ENCODE measurements at regions of chr1 and their contacts with region 1.

Region 1: GRCh38 chr1:155323798-155324610 is 3.3 kb downstream of the RUSC1 start:
- DNase-seq: peak; percentile 81
- ATAC-seq: peak; percentile 78
- H3K4me3 Mint-ChIP-seq: peak overlapping the region; percentile 88
- H3K27ac Mint-ChIP-seq: peak overlapping the region; percentile 78
- H3K4me1 Mint-ChIP-seq: peaks cover 38% of the 10 kb centered on the region
- H3K27me3 Mint-ChIP-seq: no peaks in the 10 kb centered on the region
- CTCF ChIP-seq: no peak

Region 2: GRCh38 chr1:155208541-155209311 is 115.3 kb before region 1 on chr1 and contains the start of gene MTX1:
- CTCF ChIA-PET with region 1: interaction called, 5 read pairs
- POLR2A ChIA-PET with region 1: interaction called, 4 read pairs
- intact Hi-C with region 1: loop called (anchors 1 kb)
- DNase-seq: peak; percentile 85
- ATAC-seq: peak; percentile 81
- H3K4me3 Mint-ChIP-seq: peak within 1 kb of the TSS; percentile 85
- H3K27ac Mint-ChIP-seq: peak within 1 kb of the TSS; percentile 91
- H3K4me1 Mint-ChIP-seq: peaks cover 20% of the 10 kb centered on the region
- H3K27me3 Mint-ChIP-seq: no peaks in the 10 kb centered on the region
- CTCF ChIP-seq: no peak
- total RNA-seq, gene MTX1: 36.7 and 38.2 TPM in 2 replicates

Region 3: GRCh38 chr1:155250633-155251449 is 73.2 kb before region 1 on chr1:
- CTCF ChIA-PET with region 1: interaction called, 79 read pairs
- POLR2A ChIA-PET with region 1: interaction called, 20 read pairs
- intact Hi-C with region 1: loop called (anchors 1 kb)
- DNase-seq: peak; percentile 95
- ATAC-seq: peak; percentile 96
- H3K4me3 Mint-ChIP-seq: peak overlapping the region; percentile 73
- H3K27ac Mint-ChIP-seq: peak overlapping the region; percentile 39
- H3K4me1 Mint-ChIP-seq: peaks cover 29% of the 10 kb centered on the region
- H3K27me3 Mint-ChIP-seq: no peaks in the 10 kb centered on the region
- CTCF ChIP-seq: peak; percentile 84

Region 4: DNA sequence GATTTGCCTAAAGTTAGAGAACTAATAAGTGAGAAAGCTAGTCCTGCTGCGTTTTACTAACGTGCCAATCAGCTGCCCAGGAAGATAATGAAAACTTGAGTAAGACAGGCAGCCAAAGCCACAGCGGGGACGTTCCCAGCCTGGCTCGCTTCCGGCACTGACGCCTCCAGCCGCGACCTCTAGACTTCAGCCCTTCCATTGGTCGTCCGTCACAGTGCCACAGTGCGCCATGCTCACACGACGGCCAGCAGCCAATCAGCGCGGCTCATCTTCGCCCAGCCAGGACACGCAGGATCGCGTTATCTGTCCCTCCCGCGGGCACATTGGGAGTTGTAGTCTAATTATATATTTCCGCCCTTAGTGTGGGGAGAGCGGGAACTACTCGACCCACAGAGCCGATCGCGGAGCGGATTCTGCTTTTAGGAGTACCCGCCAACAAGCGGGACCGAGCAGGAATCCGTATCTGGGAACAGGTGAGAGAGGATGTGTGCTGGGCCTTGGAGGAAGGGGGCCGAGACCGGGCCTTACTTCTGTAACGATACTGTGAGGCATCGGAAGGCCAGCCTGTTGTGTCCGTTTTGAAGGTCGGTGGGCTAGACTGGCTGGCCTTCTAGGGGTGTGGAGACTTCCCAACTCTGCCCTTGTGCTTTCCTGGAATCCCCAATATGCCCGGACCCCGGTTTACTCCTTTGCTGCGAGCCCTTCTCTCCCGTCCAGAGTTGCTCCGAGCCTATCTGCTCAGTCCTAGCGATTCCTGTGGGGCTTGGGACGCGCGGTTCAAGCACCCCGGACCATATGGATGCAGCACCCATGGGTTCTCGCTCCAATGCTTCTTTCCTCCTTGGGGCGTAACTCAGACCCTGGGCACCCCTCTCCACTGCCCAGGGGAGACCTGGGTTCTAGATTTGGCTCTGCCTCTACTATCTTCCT is 15.2 kb before region 1 on chr1 and contains the start of gene FDPS:
- CTCF ChIA-PET with region 1: interaction called, 6 read pairs
- POLR2A ChIA-PET with region 1: interaction called, 21 read pairs
- intact Hi-C with region 1: loop called (anchors 1 kb)
- DNase-seq: peak; percentile 87
- ATAC-seq: peak; percentile 97
- H3K4me3 Mint-ChIP-seq: peak within 1 kb of the TSS; percentile 94
- H3K27ac Mint-ChIP-seq: peak within 1 kb of the TSS; percentile 92
- H3K4me1 Mint-ChIP-seq: peaks cover 32% of the 10 kb centered on the region
- H3K27me3 Mint-ChIP-seq: no peaks in the 10 kb centered on the region
- CTCF ChIP-seq: no peak
- total RNA-seq, gene FDPS: 241 and 242 TPM in 2 replicates

Region 5: GRCh38 chr1:155424091-155424490 is 100.1 kb after region 1 on chr1:
- CTCF ChIA-PET with region 1: no interaction called
- POLR2A ChIA-PET with region 1: no interaction called
- intact Hi-C with region 1: no loop called
- DNase-seq: no peak
- ATAC-seq: no peak
- H3K4me3 Mint-ChIP-seq: no peak overlapping the region
- H3K27ac Mint-ChIP-seq: no peak overlapping the region
- H3K4me1 Mint-ChIP-seq: no peaks in the 10 kb centered on the region
- H3K27me3 Mint-ChIP-seq: no peaks in the 10 kb centered on the region
- CTCF ChIP-seq: no peak

Region 6: DNA sequence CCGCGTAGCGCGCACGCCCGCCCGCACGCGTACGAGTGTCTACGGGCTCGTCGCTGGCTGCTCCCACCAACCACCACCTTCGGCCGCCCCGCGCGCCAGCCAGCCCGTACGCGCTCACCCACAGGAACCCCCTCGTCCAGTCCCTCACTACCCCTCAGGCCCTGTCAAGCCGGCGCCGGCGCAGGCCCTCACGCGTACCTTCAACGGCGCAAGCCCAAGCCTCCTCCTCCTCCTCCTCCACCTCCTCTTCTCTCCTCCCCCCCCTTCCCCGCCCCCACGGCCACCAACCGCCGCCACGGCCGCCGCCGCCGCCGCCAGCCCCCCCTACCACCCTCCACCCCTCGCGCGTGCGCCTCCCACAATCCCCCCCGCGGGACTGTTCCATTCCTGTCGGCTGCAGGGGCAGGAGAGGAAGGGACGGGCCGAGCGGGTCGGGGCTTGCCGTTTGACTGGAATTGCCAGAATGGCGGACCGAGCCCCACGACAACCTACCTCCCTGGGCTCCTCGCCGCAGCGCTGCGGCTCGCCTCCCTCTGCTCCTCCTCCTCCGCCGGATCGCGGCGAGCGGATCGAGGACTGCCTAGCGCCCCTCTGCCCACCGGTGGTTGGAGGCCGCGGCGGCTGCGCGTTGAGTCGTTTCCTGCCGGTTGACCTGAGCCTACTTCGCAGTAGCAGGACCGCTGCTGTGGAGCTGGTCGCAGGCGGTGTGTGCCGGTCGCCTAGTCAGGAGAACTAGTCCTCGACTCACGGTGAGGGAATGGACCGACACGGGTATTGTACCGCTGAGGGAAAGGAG is 238.8 kb after region 1 on chr1 and contains the start of gene ASH1L:
- CTCF ChIA-PET with region 1: no interaction called
- POLR2A ChIA-PET with region 1: interaction called, 9 read pairs
- intact Hi-C with region 1: loop called (anchors 1 kb)
- DNase-seq: peak; percentile 90
- ATAC-seq: peak; percentile 80
- H3K4me3 Mint-ChIP-seq: peak within 1 kb of the TSS; percentile 99
- H3K27ac Mint-ChIP-seq: peak within 1 kb of the TSS; percentile 98
- H3K4me1 Mint-ChIP-seq: peaks cover 41% of the 10 kb centered on the region
- H3K27me3 Mint-ChIP-seq: no peaks in the 10 kb centered on the region
- CTCF ChIP-seq: no peak
- total RNA-seq, gene ASH1L: 75.6 and 90.6 TPM in 2 replicates

Region 7: GRCh38 chr1:155719703-155720102 is 395.7 kb after region 1 on chr1:
- CTCF ChIA-PET with region 1: no interaction called
- POLR2A ChIA-PET with region 1: no interaction called
- intact Hi-C with region 1: no loop called
- DNase-seq: no peak
- ATAC-seq: no peak
- H3K4me3 Mint-ChIP-seq: no peak overlapping the region
- H3K27ac Mint-ChIP-seq: no peak overlapping the region
- H3K4me1 Mint-ChIP-seq: peaks cover 16% of the 10 kb centered on the region
- H3K27me3 Mint-ChIP-seq: no peaks in the 10 kb centered on the region
- CTCF ChIP-seq: no peak